B cell (primary cell): ENCODE measurements at regions of chrX and their contacts with region 1.

Region 1: DNA sequence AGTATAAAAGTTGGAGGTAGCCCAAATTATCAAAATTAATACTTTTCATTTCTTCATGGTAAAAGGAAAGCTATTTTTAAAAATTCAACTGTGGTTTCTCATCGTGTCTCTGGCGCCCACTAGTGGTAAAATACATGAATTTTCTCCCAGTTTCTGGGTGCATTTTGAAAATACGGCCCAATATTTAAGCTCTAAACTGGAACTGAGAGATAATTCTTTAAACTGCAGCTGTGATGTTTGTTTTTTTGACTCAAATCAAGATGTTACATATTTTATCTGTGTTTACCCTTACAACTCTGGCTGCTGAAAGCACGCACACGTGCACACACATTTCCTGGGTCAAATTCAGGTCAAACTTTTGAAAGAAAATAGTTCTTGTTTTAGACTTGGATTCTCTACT is 123.9 kb upstream of the ACSL4 start:
- DNase-seq: peak; percentile 49
- ATAC-seq: no peak
- H3K4me3 ChIP-seq: no peak overlapping the region
- H3K4me3 Mint-ChIP-seq: no peak overlapping the region
- H3K27ac ChIP-seq: no peak overlapping the region
- H3K27ac Mint-ChIP-seq: no peak overlapping the region
- H3K4me1 ChIP-seq: no peaks in the 10 kb centered on the region
- H3K4me1 Mint-ChIP-seq: peaks cover 3% of the 10 kb centered on the region
- H3K27me3 ChIP-seq: no peaks in the 10 kb centered on the region
- H3K27me3 Mint-ChIP-seq: no peaks in the 10 kb centered on the region
- CTCF ChIP-seq: peak; percentile 74

Region 2: GRCh38 chrX:109485470-109486340 is 371.3 kb before region 1 on chrX:
- CTCF ChIA-PET with region 1: interaction called, 19 read pairs
- POLR2A ChIA-PET with region 1: no interaction called
- intact Hi-C with region 1: no loop called
- DNase-seq: peak; percentile 82
- ATAC-seq: peak; percentile 76
- H3K4me3 ChIP-seq: no peak overlapping the region
- H3K4me3 Mint-ChIP-seq: no peak overlapping the region
- H3K27ac ChIP-seq: no peak overlapping the region
- H3K27ac Mint-ChIP-seq: no peak overlapping the region
- H3K4me1 ChIP-seq: peaks cover 10 to 11% of the 10 kb centered on the region in 2 donors
- H3K4me1 Mint-ChIP-seq: peaks cover 10% of the 10 kb centered on the region
- H3K27me3 ChIP-seq: no peaks in the 10 kb centered on the region
- H3K27me3 Mint-ChIP-seq: peaks cover 8% of the 10 kb centered on the region
- CTCF ChIP-seq: peak; percentile 94

Region 3: DNA sequence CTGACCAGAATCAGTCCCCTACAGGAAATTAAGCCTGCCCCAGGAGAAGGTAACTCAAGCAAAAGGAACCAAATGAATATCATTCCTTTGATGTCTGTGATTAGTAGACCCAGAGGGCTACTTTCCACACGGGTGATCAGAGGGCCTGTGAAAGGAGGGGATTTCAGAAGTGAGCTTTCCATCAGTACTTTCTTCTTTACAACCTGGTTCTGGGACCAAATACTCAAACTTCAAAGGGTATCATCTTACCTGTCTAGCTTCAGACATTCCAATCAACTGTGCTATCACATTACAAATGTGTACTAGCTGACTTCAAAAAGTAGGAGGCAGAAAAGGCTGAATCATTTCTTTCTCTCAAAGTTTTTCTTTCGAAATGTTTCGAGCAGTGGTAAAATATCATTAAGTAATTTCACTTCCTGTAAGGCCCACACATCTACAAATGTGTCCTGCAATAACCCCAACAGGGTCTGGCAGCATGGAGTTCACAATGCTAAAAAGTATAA is 147.8 kb before region 1 on chrX:
- CTCF ChIA-PET with region 1: interaction called, 127 read pairs
- POLR2A ChIA-PET with region 1: no interaction called
- intact Hi-C with region 1: loop called (anchors 1 kb)
- DNase-seq: peak; percentile 47
- ATAC-seq: peak; percentile 59
- H3K4me3 ChIP-seq: peak overlapping the region in 1 of 5 experiments; percentile 4
- H3K4me3 Mint-ChIP-seq: peak overlapping the region; percentile 70
- H3K27ac ChIP-seq: peak overlapping the region; percentile 54 to 61
- H3K27ac Mint-ChIP-seq: peak overlapping the region; percentile 72
- H3K4me1 ChIP-seq: peaks cover 25 to 30% of the 10 kb centered on the region in 2 donors
- H3K4me1 Mint-ChIP-seq: peaks cover 47% of the 10 kb centered on the region
- H3K27me3 ChIP-seq: no peaks in the 10 kb centered on the region
- H3K27me3 Mint-ChIP-seq: no peaks in the 10 kb centered on the region
- CTCF ChIP-seq: no peak

Region 4: GRCh38 chrX:109714340-109714958 is 142.5 kb before region 1 on chrX:
- CTCF ChIA-PET with region 1: interaction called, 127 read pairs
- POLR2A ChIA-PET with region 1: no interaction called
- intact Hi-C with region 1: loop called (anchors 1 kb)
- DNase-seq: no peak
- ATAC-seq: no peak
- H3K4me3 ChIP-seq: no peak overlapping the region
- H3K4me3 Mint-ChIP-seq: no peak overlapping the region
- H3K27ac ChIP-seq: no peak overlapping the region
- H3K27ac Mint-ChIP-seq: no peak overlapping the region
- H3K4me1 ChIP-seq: peaks cover 3 to 6% of the 10 kb centered on the region in 2 donors
- H3K4me1 Mint-ChIP-seq: peaks cover 30% of the 10 kb centered on the region
- H3K27me3 ChIP-seq: no peaks in the 10 kb centered on the region
- H3K27me3 Mint-ChIP-seq: no peaks in the 10 kb centered on the region
- CTCF ChIP-seq: no peak

Region 5: DNA sequence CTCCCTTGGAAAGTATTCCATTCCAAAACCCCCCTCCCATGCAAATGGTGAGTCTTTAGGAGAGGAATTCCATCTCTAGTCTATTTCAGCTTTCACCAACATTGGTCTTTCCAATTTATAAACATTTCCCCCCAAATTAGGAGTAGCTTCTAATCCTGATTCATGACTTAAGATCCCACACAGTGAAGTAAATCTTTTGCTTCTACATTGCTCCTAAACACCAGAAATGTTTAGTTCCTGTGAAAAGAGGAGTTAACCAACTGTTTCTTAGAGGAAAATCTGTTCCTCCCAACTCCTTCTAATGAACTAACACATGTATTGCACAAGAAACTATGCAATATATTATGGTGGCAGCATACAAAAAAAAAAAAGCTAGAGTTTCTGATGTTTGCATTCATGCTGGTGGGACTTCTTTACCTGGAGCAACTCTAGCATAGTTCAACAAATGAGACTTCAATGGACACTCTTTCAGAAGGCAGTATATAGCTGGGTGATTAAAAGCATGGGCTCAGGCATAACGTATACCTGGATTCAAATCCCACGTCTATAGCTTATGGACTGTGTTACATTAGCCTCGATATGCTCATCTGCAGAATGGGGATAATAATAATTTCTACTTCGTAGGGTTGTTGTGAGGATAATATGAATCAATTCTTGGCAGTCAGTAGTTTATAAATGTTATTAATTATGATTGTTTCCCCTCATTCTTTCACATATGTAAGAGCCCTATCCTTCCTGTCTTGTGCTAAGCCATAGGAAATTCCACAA is 14.3 kb after region 1 on chrX:
- CTCF ChIA-PET with region 1: interaction called, 11 read pairs
- POLR2A ChIA-PET with region 1: no interaction called
- intact Hi-C with region 1: no loop called
- DNase-seq: no peak
- ATAC-seq: no peak
- H3K4me3 ChIP-seq: no peak overlapping the region
- H3K4me3 Mint-ChIP-seq: no peak overlapping the region
- H3K27ac ChIP-seq: no peak overlapping the region
- H3K27ac Mint-ChIP-seq: no peak overlapping the region
- H3K4me1 ChIP-seq: no peaks in the 10 kb centered on the region
- H3K4me1 Mint-ChIP-seq: no peaks in the 10 kb centered on the region
- H3K27me3 ChIP-seq: no peaks in the 10 kb centered on the region
- H3K27me3 Mint-ChIP-seq: no peaks in the 10 kb centered on the region
- CTCF ChIP-seq: no peak

Region 6: DNA sequence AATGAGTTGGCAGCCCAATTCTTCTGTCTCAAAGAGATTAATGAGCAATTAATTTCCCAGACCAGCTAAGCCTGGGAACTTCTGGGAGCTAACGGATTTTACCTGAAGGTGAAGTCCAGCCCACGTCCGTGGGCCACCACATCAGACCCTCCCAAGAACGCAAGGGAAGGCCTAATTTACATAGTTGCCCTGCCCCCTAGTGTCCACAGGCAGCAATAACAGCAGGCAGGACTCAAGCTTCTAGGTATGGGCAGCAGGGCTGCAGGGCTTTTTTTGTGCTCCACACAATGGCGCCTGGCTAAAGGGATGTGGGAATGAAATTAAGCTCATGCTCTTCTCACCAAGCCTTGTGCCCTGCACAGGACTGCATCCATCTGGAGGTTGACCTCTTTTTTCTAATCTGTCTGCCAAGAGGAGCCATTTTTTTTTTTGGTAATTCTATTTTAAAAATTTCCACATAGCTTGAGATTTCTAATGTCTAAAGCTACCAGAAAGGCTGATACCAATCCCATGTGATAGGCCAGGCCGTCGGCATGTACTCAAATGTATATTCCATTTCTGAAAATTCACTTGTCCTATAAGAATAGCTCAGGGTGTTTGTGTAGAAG is 34.0 kb after region 1 on chrX:
- CTCF ChIA-PET with region 1: interaction called, 25 read pairs
- POLR2A ChIA-PET with region 1: no interaction called
- intact Hi-C with region 1: no loop called
- DNase-seq: peak; percentile 58
- ATAC-seq: peak; percentile 49
- H3K4me3 ChIP-seq: no peak overlapping the region
- H3K4me3 Mint-ChIP-seq: no peak overlapping the region
- H3K27ac ChIP-seq: no peak overlapping the region
- H3K27ac Mint-ChIP-seq: peak overlapping the region; percentile 41
- H3K4me1 ChIP-seq: peaks cover 25 to 34% of the 10 kb centered on the region in 2 donors
- H3K4me1 Mint-ChIP-seq: peaks cover 32% of the 10 kb centered on the region
- H3K27me3 ChIP-seq: no peaks in the 10 kb centered on the region
- H3K27me3 Mint-ChIP-seq: no peaks in the 10 kb centered on the region
- CTCF ChIP-seq: peak; percentile 77

Region 7: GRCh38 chrX:110558406-110558805 is 701.4 kb after region 1 on chrX:
- CTCF ChIA-PET with region 1: no interaction called
- POLR2A ChIA-PET with region 1: no interaction called
- intact Hi-C with region 1: no loop called
- DNase-seq: no peak
- ATAC-seq: no peak
- H3K4me3 ChIP-seq: no peak overlapping the region
- H3K4me3 Mint-ChIP-seq: no peak overlapping the region
- H3K27ac ChIP-seq: no peak overlapping the region
- H3K27ac Mint-ChIP-seq: no peak overlapping the region
- H3K4me1 ChIP-seq: no peaks in the 10 kb centered on the region
- H3K4me1 Mint-ChIP-seq: no peaks in the 10 kb centered on the region
- H3K27me3 ChIP-seq: no peaks in the 10 kb centered on the region
- H3K27me3 Mint-ChIP-seq: no peaks in the 10 kb centered on the region
- CTCF ChIP-seq: no peak